IMR-90 (cell line): ENCODE measurements at regions of chr5 and their contacts with region 1.

Region 1: DNA sequence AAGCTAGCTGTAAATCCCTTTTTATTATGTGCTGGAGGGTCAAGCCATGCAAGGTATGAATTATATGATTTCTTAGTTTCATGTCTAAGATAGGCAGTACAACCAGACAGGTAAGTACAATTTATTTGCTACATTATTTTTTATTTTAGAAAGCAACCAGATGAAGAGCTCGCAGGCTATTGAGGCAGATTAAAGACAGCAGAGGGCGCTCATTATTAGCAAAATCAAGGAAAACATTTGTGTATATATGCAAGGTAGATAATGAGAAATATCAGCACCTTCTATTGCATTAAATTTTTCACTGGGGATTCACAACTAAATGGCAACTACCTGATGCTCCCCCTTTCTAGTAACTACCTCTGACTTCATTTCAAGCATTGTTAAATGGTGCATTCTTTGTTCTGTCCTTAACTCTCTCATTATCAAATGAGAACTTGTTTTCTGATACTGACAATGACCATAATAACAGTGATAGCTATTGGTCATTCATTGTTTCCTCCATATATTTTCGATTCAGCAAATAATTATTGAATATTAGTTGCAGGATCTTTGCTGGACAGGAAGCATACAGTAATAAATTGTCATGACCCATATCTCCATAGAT is 8.6 kb downstream of the SCGB3A2 start:
- DNase-seq: peak; percentile 35
- ATAC-seq: peak; percentile 53; the same call in 1 of the 2 replicates
- H3K4me3 ChIP-seq: no peak overlapping the region
- H3K27ac ChIP-seq: no peak overlapping the region
- H3K4me1 ChIP-seq: no peaks in the 10 kb centered on the region
- H3K27me3 ChIP-seq: no peaks in the 10 kb centered on the region
- CTCF ChIP-seq: peak; percentile 52
- POLR2A ChIP-seq: no peak
- RAD21 ChIP-seq: peak; percentile 46

Region 2: DNA sequence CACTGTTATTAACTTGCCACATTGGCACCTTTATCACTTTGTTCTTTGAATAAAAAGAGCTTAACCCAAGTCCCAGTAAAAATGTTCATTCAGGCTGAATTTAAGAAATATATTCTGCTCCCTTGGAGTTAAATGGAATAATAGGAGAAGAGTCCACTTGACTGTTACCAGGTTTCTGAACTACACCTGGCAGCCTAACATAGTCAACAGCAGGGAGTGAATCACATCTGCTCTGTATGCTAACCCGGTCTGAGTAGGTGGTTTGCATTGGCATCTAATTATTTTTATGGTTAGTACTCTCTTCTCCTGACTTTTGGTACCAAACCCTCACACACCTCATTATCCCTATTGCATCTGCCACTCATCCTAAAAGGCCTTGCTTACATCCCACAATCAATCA is 565.6 kb before region 1 on chr5:
- CTCF ChIA-PET with region 1: no interaction called
- POLR2A ChIA-PET with region 1: no interaction called
- dilution Hi-C with region 1: no loop called
- in situ Hi-C with region 1: no loop called
- intact Hi-C with region 1: no loop called
- DNase-seq: no peak
- ATAC-seq: no peak
- H3K4me3 ChIP-seq: no peak overlapping the region
- H3K27ac ChIP-seq: no peak overlapping the region
- H3K4me1 ChIP-seq: no peaks in the 10 kb centered on the region
- H3K27me3 ChIP-seq: no peaks in the 10 kb centered on the region
- CTCF ChIP-seq: no peak
- POLR2A ChIP-seq: no peak
- RAD21 ChIP-seq: no peak

Region 3: GRCh38 chr5:147935032-147935431 is 47.9 kb after region 1 on chr5:
- CTCF ChIA-PET with region 1: no interaction called
- POLR2A ChIA-PET with region 1: no interaction called
- dilution Hi-C with region 1: no loop called
- in situ Hi-C with region 1: no loop called
- intact Hi-C with region 1: loop called (anchors 1 kb)
- DNase-seq: peak; percentile 62
- ATAC-seq: no peak
- H3K4me3 ChIP-seq: no peak overlapping the region
- H3K27ac ChIP-seq: no peak overlapping the region
- H3K4me1 ChIP-seq: no peaks in the 10 kb centered on the region
- H3K27me3 ChIP-seq: no peaks in the 10 kb centered on the region
- CTCF ChIP-seq: peak; percentile 53
- POLR2A ChIP-seq: no peak
- RAD21 ChIP-seq: peak; percentile 66

Region 4: DNA sequence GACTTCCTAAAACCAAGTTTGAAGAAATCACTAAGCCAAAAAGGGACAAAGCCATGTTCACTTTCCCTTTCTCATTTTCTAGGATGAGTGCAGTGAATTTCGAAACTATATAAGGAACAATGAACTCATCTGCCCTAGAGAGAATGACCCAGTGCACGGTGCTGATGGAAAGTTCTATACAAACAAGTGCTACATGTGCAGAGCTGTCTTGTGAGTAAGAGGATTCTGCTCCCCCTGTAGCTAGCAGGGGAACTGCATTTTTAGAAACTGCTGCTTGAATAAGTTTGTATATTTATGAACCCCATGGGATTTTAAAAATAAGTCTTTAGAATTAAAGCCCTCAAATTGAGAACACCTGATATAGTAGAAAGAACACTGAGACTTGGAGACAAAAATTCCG is 238.5 kb after region 1 on chr5:
- CTCF ChIA-PET with region 1: no interaction called
- POLR2A ChIA-PET with region 1: no interaction called
- dilution Hi-C with region 1: no loop called
- in situ Hi-C with region 1: no loop called
- intact Hi-C with region 1: loop called (anchors 10 kb)
- DNase-seq: peak; percentile 8
- ATAC-seq: no peak
- H3K4me3 ChIP-seq: no peak overlapping the region
- H3K27ac ChIP-seq: no peak overlapping the region
- H3K4me1 ChIP-seq: no peaks in the 10 kb centered on the region
- H3K27me3 ChIP-seq: no peaks in the 10 kb centered on the region
- CTCF ChIP-seq: no peak
- POLR2A ChIP-seq: no peak
- RAD21 ChIP-seq: no peak

Region 5: DNA sequence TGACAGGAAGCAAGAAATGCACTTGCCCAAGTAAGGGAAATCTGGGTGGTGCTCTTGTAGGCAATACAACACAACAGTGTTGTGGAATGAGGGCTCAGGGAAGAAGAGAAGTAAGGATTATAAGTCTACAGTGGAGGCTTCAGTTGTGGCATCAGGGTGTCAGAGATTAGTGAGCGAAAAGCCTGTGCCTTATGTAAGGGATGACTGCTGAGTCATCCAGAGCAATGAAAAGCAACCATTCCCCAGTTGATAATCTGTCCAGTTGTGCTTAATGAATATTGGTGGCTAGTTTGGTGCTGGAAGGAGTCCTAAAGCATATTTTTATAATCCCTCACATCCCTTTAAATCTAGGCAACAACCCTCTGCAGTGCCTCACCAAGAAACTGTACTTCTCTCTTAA is 538.7 kb after region 1 on chr5:
- CTCF ChIA-PET with region 1: no interaction called
- POLR2A ChIA-PET with region 1: no interaction called
- dilution Hi-C with region 1: no loop called
- in situ Hi-C with region 1: no loop called
- intact Hi-C with region 1: no loop called
- DNase-seq: no peak
- ATAC-seq: 0 out of 2 replicates have a peak, but pooled peaks have one; percentile 11
- H3K4me3 ChIP-seq: no peak overlapping the region
- H3K27ac ChIP-seq: no peak overlapping the region
- H3K4me1 ChIP-seq: no peaks in the 10 kb centered on the region
- H3K27me3 ChIP-seq: no peaks in the 10 kb centered on the region
- CTCF ChIP-seq: no peak
- POLR2A ChIP-seq: no peak
- RAD21 ChIP-seq: no peak